ENCODE measurements at regions of chr5 and their contacts with region 1.

Region 1: GRCh38 chr5:50667653-50668595 is 1.5 kb downstream of the PARP8 start:
- DNase-seq: peak; percentile 83
- H3K4me3 Mint-ChIP-seq: peak overlapping the region; percentile 94
- H3K27ac Mint-ChIP-seq: peak overlapping the region; percentile 99
- H3K4me1 Mint-ChIP-seq: peaks cover 59% of the 10 kb centered on the region
- H3K27me3 Mint-ChIP-seq: no peaks in the 10 kb centered on the region

Region 2: GRCh38 chr5:50501491-50502228 is 166.3 kb before region 1 on chr5:
- intact Hi-C with region 1: loop called (anchors 1 kb)
- DNase-seq: no peak
- H3K4me3 Mint-ChIP-seq: peak overlapping the region; percentile 19
- H3K27ac Mint-ChIP-seq: no peak overlapping the region
- H3K4me1 Mint-ChIP-seq: peaks cover 24% of the 10 kb centered on the region
- H3K27me3 Mint-ChIP-seq: peaks cover 4% of the 10 kb centered on the region

Region 3: DNA sequence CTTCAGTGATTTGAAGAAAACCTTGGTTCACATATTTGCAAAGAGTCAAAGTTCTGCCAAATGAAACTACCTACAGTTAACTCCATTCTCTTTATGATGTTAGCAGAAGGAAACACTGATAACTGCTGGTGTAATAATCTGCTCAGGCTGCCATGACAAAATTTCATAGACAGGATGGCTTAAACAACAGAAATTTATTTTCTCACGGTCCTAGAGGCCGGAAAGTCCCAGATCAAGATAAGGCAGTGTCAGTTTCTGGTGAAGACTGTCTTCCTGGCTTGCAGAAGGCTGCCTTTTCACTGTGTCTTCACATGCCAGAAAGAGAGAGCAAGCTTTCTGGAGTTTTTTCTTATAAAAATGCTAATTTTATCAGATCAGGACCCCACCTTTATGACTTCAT is 103.8 kb before region 1 on chr5:
- intact Hi-C with region 1: loop called (anchors 2 kb)
- DNase-seq: peak; percentile 39
- H3K4me3 Mint-ChIP-seq: peak overlapping the region; percentile 23
- H3K27ac Mint-ChIP-seq: peak overlapping the region; percentile 31
- H3K4me1 Mint-ChIP-seq: peaks cover 43% of the 10 kb centered on the region
- H3K27me3 Mint-ChIP-seq: peaks cover 2% of the 10 kb centered on the region

Region 4: GRCh38 chr5:50595199-50595598 is 72.7 kb before region 1 on chr5:
- intact Hi-C with region 1: loop called (anchors 2 kb)
- DNase-seq: no peak
- H3K4me3 Mint-ChIP-seq: no peak overlapping the region
- H3K27ac Mint-ChIP-seq: no peak overlapping the region
- H3K4me1 Mint-ChIP-seq: peaks cover 55% of the 10 kb centered on the region
- H3K27me3 Mint-ChIP-seq: no peaks in the 10 kb centered on the region

Region 5: GRCh38 chr5:50647726-50648125 is 20.2 kb before region 1 on chr5:
- intact Hi-C with region 1: no loop called
- DNase-seq: no peak
- H3K4me3 Mint-ChIP-seq: no peak overlapping the region
- H3K27ac Mint-ChIP-seq: no peak overlapping the region
- H3K4me1 Mint-ChIP-seq: peaks cover 5% of the 10 kb centered on the region
- H3K27me3 Mint-ChIP-seq: no peaks in the 10 kb centered on the region

Region 6: GRCh38 chr5:50711273-50711672 is 43.3 kb after region 1 on chr5:
- intact Hi-C with region 1: loop called (anchors 1 kb)
- DNase-seq: peak; percentile 66
- H3K4me3 Mint-ChIP-seq: peak overlapping the region; percentile 69
- H3K27ac Mint-ChIP-seq: peak overlapping the region; percentile 83
- H3K4me1 Mint-ChIP-seq: peaks cover 57% of the 10 kb centered on the region
- H3K27me3 Mint-ChIP-seq: no peaks in the 10 kb centered on the region

Region 7: GRCh38 chr5:50751064-50751657 is 83.2 kb after region 1 on chr5:
- intact Hi-C with region 1: loop called (anchors 2 kb)
- DNase-seq: no peak
- H3K4me3 Mint-ChIP-seq: no peak overlapping the region
- H3K27ac Mint-ChIP-seq: no peak overlapping the region
- H3K4me1 Mint-ChIP-seq: peaks cover 41% of the 10 kb centered on the region
- H3K27me3 Mint-ChIP-seq: no peaks in the 10 kb centered on the region

Region 8: GRCh38 chr5:50947906-50948683 is 280.2 kb after region 1 on chr5:
- intact Hi-C with region 1: no loop called
- DNase-seq: no peak
- H3K4me3 Mint-ChIP-seq: no peak overlapping the region
- H3K27ac Mint-ChIP-seq: no peak overlapping the region
- H3K4me1 Mint-ChIP-seq: no peaks in the 10 kb centered on the region
- H3K27me3 Mint-ChIP-seq: peaks cover 5% of the 10 kb centered on the region